ENCODE measurements at regions of chr5 and their contacts with region 1.

Region 1: DNA sequence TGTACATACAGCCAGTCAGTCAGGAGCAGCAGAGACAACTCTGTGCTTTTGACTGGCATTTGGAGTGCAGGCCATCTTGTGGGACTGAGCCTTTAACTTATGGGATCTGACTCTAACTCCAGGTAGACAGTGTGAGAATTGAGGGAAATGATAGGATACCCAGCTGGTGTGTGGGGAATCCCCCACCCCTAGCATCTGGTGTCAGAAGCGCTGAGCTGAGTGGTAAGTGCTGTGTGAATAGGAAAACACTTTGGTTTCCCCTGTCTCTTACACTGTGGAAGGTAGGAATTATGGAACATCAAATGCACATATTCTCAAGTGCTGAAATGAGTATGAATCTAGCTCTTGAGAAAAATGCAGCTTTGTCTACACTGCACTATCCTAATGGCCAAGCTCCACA is 43.9 kb downstream of the CCDC125 start:
- DNase-seq: peak in 1 of 2 experiments; percentile 39
- H3K4me3 ChIP-seq: no peak overlapping the region
- H3K27ac ChIP-seq: no peak overlapping the region
- H3K4me1 ChIP-seq: peaks cover 0 to 6% (median 0%) of the 10 kb centered on the region in 4 experiments; a peak in 1 of 7 replicates
- H3K27me3 ChIP-seq: no peaks in the 10 kb centered on the region
- CTCF ChIP-seq: no peak
- EP300 ChIP-seq: no peak
- POLR2A ChIP-seq: no peak
- RAD21 ChIP-seq: no peak

Region 2: GRCh38 chr5:69265931-69266330 is 22.8 kb before region 1 on chr5:
- CTCF ChIA-PET with region 1: interaction called, 15 read pairs
- POLR2A ChIA-PET with region 1: no interaction called
- DNase-seq: peak; percentile 49 to 85
- H3K4me3 ChIP-seq: no peak overlapping the region
- H3K27ac ChIP-seq: no peak overlapping the region
- H3K4me1 ChIP-seq: no peaks in the 10 kb centered on the region
- H3K27me3 ChIP-seq: no peaks in the 10 kb centered on the region
- CTCF ChIP-seq: peak; percentile 78 to 94 (median 82)
- EP300 ChIP-seq: no peak
- POLR2A ChIP-seq: no peak
- RAD21 ChIP-seq: peak; percentile 67 to 79

Region 3: GRCh38 chr5:69276422-69277174 is 12.1 kb before region 1 on chr5:
- CTCF ChIA-PET with region 1: interaction called, 5 read pairs
- POLR2A ChIA-PET with region 1: interaction called, 11 read pairs
- DNase-seq: no peak
- H3K4me3 ChIP-seq: no peak overlapping the region
- H3K27ac ChIP-seq: no peak overlapping the region
- H3K4me1 ChIP-seq: no peaks in the 10 kb centered on the region
- H3K27me3 ChIP-seq: no peaks in the 10 kb centered on the region
- CTCF ChIP-seq: no peak
- EP300 ChIP-seq: no peak
- POLR2A ChIP-seq: no peak
- RAD21 ChIP-seq: no peak

Region 4: DNA sequence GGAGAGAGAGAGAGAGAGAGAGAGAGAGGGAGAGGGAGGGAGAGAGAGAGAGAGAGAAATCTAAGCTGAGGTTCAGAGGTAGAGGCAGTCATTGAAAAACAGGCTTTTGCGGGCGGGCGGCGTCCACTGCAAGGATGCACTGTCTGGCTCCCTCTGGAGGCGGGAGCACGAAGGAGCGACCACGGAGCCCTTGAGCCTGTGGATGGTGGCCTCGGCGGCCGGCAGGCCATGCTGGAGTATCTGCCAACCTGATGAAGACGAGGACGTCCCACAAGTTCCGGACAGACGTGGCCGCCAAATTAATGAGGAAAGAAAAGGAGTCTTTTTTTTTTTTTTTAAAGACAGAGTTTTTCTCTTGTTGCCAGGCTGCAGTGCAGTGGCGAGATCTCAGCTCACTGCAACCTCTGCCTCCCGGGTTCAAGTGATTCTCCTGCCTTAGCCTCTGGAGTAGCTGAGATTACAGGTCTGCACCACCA is 46.1 kb after region 1 on chr5:
- CTCF ChIA-PET with region 1: interaction called, 12 read pairs
- POLR2A ChIA-PET with region 1: interaction called, 3 read pairs
- DNase-seq: peak; percentile 67 to 91
- H3K4me3 ChIP-seq: no peak overlapping the region
- H3K27ac ChIP-seq: no peak overlapping the region
- H3K4me1 ChIP-seq: peaks cover 0 to 2% (median 0%) of the 10 kb centered on the region in 4 experiments; a peak in 3 of 7 replicates
- H3K27me3 ChIP-seq: no peaks in the 10 kb centered on the region
- CTCF ChIP-seq: peak; percentile 83 to 87 (median 85)
- EP300 ChIP-seq: no peak
- POLR2A ChIP-seq: no peak
- RAD21 ChIP-seq: peak; percentile 77

Measured in H1 (cell line).